Activated CD4-positive, alpha-beta T cell treated with anti-CD3 and anti-CD28 coated beads for 36 hours (primary cell): ENCODE measurements at regions of chr7 and their contacts with region 1.

Region 1: DNA sequence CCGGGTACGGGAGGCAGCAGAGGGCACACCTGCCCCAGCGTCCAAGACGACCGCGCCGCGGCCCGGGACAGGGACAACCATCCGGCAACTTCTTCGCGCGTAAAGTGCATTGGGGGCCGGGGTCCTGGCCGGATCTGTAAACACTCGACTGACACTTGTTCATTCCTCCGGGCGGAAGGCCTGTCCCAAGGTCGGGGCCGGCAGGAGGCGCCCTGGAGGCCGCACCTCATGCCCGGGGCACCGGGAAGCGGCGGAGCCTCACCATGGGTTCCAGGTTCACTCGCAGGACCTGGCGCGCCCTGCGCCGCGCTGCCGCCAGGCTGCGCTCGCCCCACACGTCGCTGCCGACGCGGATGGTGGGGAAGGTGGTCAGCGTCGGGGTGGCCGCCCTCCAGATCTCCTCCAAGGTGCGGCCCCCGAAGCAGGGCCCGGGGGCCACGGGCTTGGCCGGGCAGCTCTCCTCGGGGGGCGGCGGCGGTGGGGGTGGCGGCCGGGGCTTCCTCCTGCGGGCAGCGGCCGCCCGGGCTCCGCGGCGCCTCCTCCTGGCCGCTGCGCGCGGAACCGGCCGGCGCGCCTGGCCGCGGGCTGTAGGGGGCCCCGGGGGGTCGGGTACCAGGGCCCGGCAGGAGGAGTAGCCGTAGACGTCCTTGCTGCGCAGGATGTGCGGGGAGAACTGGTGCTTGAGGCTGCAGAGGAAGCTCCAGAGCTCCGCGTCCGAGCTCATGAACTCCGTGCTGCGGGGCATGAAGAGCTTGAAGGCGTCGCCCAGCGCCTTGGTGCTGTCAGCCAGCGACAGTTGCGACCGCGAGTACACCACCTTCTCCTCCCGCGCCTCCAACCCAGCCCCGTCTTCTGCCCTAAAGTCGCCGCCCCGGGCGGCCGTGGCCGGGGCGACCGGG is 746 bp downstream of the CCDC71L start:
- DNase-seq: peak; percentile 92
- ATAC-seq: peak; percentile 72
- H3K4me3 Mint-ChIP-seq: peak overlapping the region; percentile 86
- H3K27ac Mint-ChIP-seq: peak overlapping the region; percentile 94
- H3K4me1 Mint-ChIP-seq: peaks cover 31% of the 10 kb centered on the region
- H3K27me3 Mint-ChIP-seq: no peaks in the 10 kb centered on the region

Region 2: DNA sequence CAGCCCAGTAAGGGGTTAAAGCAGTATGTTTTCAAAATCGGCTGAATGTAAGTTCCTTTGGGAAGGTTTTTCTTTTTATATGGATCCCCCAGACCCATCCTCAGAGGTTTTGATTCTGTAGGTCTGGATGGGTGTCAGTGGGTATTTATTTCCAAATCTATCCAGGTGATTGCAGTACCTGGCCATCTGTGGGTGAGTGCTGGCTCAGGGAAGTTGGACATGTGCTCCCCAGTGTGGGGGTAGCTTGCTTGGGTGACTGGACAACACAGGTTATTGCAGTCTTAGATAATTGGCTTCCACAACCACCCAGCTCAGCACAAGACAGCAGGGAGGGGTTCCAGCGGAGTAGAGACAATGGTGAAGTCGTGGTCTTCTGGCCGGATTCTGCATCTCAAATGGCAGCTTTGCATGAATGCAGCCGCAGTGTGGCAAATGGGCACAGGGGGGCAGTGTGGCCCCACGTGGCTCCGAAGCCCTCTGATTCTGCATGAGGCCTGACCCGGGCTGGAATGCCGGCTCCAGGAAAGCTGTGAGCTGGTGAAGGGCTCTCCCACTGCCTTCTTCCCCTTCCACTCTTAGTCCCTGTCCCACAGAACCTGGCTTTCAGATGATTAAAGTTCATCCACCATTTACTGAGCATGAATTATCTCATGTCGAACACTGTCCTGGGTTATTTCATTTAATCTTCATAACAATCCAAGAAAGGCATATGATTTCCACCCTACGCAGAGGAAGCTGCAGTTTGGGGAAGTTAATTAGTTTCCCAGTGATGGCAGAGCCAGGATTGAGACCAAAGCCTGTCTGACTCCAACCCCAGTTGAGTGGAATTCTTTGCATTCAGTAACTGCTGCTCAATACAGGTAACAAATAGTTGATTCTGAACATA is 483.6 kb before region 1 on chr7:
- CTCF ChIA-PET with region 1: interaction called, 10 read pairs
- POLR2A ChIA-PET with region 1: no interaction called
- intact Hi-C with region 1: loop called (anchors 1 to 2 kb)
- DNase-seq: peak; percentile 86
- ATAC-seq: peak; percentile 91
- H3K4me3 Mint-ChIP-seq: no peak overlapping the region
- H3K27ac Mint-ChIP-seq: peak overlapping the region; percentile 4
- H3K4me1 Mint-ChIP-seq: peaks cover 2% of the 10 kb centered on the region
- H3K27me3 Mint-ChIP-seq: peaks cover 10% of the 10 kb centered on the region

Region 3: DNA sequence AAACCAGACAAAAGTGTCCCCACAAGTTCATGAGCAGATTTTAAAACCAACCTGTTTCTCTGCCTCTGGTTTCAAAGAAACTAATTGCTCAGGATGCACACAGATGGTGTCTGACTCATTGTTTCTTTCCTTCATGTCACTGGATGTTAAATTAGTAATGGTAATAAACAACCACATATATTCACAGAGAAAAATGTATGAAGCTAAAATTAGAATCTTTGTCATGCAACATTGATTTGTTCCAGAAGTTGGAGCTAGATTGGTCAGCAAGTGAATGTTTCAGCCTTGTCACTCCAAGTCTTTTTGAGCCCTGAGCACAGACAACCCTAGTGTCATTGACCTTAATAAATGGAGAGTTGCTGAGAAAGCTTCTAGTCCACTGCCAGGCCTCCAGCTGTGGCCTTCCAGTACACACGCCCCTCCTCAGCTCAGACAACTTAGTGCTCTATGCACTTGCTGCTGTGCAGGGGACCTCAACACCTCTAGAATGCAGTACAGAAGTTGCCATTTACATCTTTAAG is 175.1 kb before region 1 on chr7:
- CTCF ChIA-PET with region 1: no interaction called
- POLR2A ChIA-PET with region 1: no interaction called
- intact Hi-C with region 1: loop called in 1 of 2 experiments (anchors 5 kb)
- DNase-seq: no peak
- ATAC-seq: peak; percentile 73
- H3K4me3 Mint-ChIP-seq: no peak overlapping the region
- H3K27ac Mint-ChIP-seq: peak overlapping the region; percentile 80
- H3K4me1 Mint-ChIP-seq: peaks cover 60% of the 10 kb centered on the region
- H3K27me3 Mint-ChIP-seq: peaks cover 10% of the 10 kb centered on the region

Region 4: DNA sequence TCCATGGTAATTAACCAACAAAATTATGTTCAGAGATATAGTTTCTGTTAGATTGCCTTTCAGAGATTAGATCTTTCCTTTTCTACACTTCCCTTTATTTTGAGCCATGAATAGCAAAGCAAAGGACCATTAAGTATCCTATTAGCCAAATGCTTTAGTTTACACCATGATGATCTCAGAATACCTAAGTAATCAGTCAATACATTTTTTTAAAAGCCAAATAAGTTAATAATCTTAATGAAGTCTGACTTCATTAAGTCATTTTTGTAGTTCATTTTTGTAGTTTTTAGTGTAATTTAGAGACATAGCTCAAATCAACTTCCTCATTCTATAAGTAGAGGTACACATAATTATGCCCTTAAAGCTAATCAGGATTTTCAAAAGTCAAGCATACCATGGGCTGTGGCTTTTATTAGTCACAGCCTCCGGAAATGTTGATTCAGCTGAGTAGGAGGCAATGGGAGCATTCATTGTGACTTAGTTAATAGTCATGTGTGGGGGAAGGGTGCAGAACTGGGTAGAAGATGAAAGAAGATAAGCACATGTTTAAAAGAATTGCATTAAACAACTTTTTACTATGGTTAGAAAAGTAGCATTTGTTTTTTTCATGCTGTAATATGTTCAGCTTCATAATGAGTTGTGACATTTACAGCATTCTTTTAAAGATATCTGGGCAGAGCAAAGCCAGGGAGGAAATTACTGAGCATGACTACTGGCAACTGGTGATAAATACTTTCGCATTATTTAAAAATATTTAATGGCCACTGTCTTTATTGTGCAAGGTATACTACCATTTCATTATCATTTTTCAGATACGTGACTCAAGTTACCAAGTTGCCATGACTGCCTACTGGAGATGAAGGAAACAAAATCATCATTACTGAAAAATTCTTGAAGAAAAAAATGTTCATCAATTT is 58.0 kb after region 1 on chr7:
- CTCF ChIA-PET with region 1: interaction called, 3 read pairs
- POLR2A ChIA-PET with region 1: no interaction called
- intact Hi-C with region 1: loop called (anchors 1 kb)
- DNase-seq: peak; percentile 90
- ATAC-seq: peak; percentile 98
- H3K4me3 Mint-ChIP-seq: no peak overlapping the region
- H3K27ac Mint-ChIP-seq: no peak overlapping the region
- H3K4me1 Mint-ChIP-seq: peaks cover 13% of the 10 kb centered on the region
- H3K27me3 Mint-ChIP-seq: no peaks in the 10 kb centered on the region

Region 5: DNA sequence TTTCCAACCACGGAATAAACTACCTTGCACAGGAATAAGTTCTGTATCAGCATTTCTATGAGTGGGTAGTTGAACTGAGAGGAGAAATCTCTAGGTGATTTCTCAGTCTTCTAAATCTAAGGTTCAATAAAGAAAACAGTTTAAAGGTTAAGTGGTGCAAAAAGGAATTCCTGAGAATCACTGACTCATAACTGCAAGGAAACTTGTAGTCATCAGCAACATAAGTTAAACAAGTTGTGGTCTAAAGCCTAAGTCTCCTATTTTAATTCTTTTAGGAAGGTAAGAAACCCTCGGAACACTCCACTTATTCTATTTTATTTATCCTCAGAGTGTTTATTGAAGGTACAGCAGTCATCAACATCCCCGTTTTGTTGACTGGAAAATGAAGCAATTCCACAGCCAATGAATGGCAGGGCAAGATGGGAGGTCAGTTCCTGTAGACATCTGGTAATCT is 112.5 kb after region 1 on chr7:
- CTCF ChIA-PET with region 1: interaction called, 6 read pairs
- POLR2A ChIA-PET with region 1: interaction called, 3 read pairs
- intact Hi-C with region 1: loop called in 1 of 2 experiments (anchors 1 kb)
- DNase-seq: no peak
- ATAC-seq: peak; percentile 79
- H3K4me3 Mint-ChIP-seq: peak overlapping the region; percentile 27
- H3K27ac Mint-ChIP-seq: peak overlapping the region; percentile 91
- H3K4me1 Mint-ChIP-seq: peaks cover 66% of the 10 kb centered on the region
- H3K27me3 Mint-ChIP-seq: no peaks in the 10 kb centered on the region

Region 6: DNA sequence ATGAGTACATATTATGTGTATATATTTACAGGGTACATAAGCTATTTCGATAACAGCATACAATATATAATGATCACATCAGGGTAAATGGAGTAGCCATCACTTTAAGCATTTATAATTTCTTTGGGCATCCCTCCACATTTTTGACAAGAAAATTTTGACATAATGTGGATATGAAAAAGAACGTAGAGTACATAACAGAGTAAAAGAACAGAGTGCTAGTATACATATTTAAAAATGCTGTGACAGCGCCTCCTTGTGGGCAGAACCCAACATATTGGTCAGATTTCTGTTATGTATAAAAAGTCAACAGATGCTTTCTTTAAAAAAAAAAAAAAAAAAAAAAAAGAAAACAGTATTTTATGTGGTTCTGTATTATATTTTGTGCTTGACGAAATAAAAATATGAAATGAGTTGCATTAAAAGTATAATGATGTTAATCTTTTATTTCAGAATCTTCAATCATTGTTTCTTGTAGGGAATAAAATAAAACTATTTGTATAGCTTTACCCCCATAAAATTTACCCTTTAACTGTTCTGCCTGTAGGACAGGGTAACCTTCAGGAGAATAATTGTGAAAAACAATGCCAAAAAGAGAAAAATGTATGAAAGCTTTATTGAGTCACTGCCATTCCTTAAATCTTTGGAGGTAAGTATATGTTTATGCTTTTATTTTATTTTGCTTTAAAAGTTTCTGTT is 490.3 kb after region 1 on chr7:
- CTCF ChIA-PET with region 1: no interaction called
- POLR2A ChIA-PET with region 1: no interaction called
- intact Hi-C with region 1: loop called (anchors 5 kb)
- DNase-seq: peak; percentile 86
- ATAC-seq: peak; percentile 83
- H3K4me3 Mint-ChIP-seq: no peak overlapping the region
- H3K27ac Mint-ChIP-seq: no peak overlapping the region
- H3K4me1 Mint-ChIP-seq: peaks cover 4% of the 10 kb centered on the region
- H3K27me3 Mint-ChIP-seq: no peaks in the 10 kb centered on the region